Activated CD4-positive, alpha-beta T cell treated with anti-CD3 and anti-CD28 coated beads for 36 hours (primary cell): ENCODE measurements at regions of chr17 and their contacts with region 1.

Region 1: GRCh38 chr17:1516388-1517161 is at the start of gene INPP5K:
- DNase-seq: peak; percentile 99
- ATAC-seq: peak; percentile 99
- H3K4me3 Mint-ChIP-seq: peak within 1 kb of the TSS; percentile 85
- H3K27ac Mint-ChIP-seq: peak within 1 kb of the TSS; percentile 81
- H3K4me1 Mint-ChIP-seq: peaks cover 28% of the 10 kb centered on the region
- H3K27me3 Mint-ChIP-seq: no peaks in the 10 kb centered on the region
- total RNA-seq, gene INPP5K: 18.5 to 27.3 TPM

Region 2: GRCh38 chr17:1267471-1267947 is 249.1 kb before region 1 on chr17:
- CTCF ChIA-PET with region 1: no interaction called
- POLR2A ChIA-PET with region 1: no interaction called
- intact Hi-C with region 1: loop called in 1 of 2 experiments (anchors 1 kb)
- DNase-seq: no peak
- ATAC-seq: peak; percentile 9
- H3K4me3 Mint-ChIP-seq: peak overlapping the region; percentile 74
- H3K27ac Mint-ChIP-seq: peak overlapping the region; percentile 47
- H3K4me1 Mint-ChIP-seq: peaks cover 9% of the 10 kb centered on the region
- H3K27me3 Mint-ChIP-seq: peaks cover 14% of the 10 kb centered on the region

Region 3: DNA sequence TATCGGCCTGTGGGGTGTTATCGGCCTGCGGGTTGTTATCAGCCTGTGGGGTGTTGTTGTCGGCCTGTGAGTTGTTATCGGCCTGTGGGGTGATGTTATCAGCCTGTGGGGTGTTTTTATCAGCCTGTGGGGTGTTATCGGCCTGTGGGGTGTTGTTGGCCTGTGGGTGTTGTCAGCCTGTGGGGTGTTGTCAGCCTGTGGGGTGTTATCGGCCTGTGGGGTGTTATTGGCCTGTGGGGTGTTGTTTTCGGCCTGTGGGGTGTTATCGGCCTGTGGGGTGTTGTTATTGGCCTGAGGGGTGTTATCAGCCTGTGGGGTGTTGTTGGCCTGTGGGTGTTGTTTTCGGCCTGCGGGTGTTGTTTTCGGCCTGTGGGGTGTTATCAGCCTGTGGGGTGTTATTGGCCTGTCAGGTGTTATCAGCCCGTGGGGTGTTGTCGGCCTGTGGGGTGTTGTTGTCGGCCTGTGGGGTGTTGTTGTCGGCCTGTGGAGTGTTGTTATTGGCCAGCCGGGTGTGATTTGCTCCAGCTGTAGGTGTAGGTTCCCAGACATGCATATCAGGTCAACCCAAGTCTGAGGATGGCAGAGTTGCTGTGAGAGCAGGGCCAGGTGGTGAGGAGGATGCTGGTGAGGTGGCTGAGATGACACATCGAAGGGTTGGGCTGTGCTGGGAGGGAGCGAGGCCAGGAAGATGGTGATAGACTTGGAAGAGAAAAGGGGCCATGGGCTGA is 230.0 kb before region 1 on chr17:
- CTCF ChIA-PET with region 1: no interaction called
- POLR2A ChIA-PET with region 1: no interaction called
- intact Hi-C with region 1: no loop called
- DNase-seq: no peak
- ATAC-seq: no peak
- H3K4me3 Mint-ChIP-seq: no peak overlapping the region
- H3K27ac Mint-ChIP-seq: no peak overlapping the region
- H3K4me1 Mint-ChIP-seq: no peaks in the 10 kb centered on the region
- H3K27me3 Mint-ChIP-seq: no peaks in the 10 kb centered on the region

Region 4: GRCh38 chr17:1374431-1375177 is 142.0 kb before region 1 on chr17:
- CTCF ChIA-PET with region 1: interaction called, 10 read pairs
- POLR2A ChIA-PET with region 1: interaction called, 5 read pairs
- intact Hi-C with region 1: no loop called
- DNase-seq: no peak
- ATAC-seq: peak; percentile 70
- H3K4me3 Mint-ChIP-seq: peak overlapping the region; percentile 25
- H3K27ac Mint-ChIP-seq: peak overlapping the region; percentile 59
- H3K4me1 Mint-ChIP-seq: peaks cover 75% of the 10 kb centered on the region
- H3K27me3 Mint-ChIP-seq: no peaks in the 10 kb centered on the region

Region 5: DNA sequence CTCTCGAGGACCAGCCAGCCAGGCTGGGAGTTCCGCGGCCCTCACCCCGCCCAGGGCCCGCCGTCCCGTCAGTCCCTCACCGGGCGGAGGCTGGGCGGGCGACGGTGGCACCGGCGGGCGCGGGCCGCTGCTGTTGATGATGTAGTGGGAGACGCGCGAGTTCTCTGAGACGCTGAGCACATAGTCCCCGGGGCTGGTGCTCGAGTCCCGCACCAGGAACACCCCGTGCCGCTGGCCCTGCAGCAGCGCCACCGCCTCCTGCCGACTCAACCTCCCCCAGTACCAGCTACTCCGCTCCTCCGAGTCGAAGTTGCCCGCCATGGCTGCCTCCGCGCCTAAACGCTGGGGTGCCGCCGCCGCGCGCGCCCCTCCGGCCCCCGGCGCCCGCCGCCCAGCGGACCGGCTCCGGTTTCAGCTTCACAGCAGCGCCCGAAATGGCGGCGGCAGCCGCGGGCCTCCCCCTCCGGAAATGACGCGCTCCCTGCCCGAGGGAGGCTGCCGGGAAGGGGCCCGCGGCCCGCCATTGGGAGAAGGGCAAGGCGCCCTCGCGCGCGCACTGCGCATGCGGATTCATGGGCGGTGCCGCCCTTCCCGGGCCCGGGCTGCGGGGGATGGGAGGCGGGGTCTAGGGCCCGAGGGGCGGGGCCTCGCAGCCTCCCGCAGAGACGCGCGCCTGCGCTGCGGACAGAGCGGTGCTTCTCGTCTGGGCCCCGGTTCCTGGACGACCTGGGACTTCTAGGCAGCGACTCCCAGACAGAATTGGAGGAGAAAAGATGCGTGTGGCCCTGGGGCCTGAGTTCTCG is 60.6 kb before region 1 on chr17 and contains the start of gene CRK:
- CTCF ChIA-PET with region 1: interaction called, 4 read pairs
- POLR2A ChIA-PET with region 1: no interaction called
- intact Hi-C with region 1: loop called (anchors 1 kb)
- DNase-seq: peak; percentile 99
- ATAC-seq: peak; percentile 93
- H3K4me3 Mint-ChIP-seq: peak within 1 kb of the TSS; percentile 82
- H3K27ac Mint-ChIP-seq: peak within 1 kb of the TSS; percentile 89
- H3K4me1 Mint-ChIP-seq: peaks cover 46% of the 10 kb centered on the region
- H3K27me3 Mint-ChIP-seq: peaks cover 9% of the 10 kb centered on the region
- total RNA-seq, gene CRK: 10.1 to 11.6 TPM

Region 6: GRCh38 chr17:1503699-1504098 is 12.9 kb before region 1 on chr17:
- CTCF ChIA-PET with region 1: interaction called, 13 read pairs
- POLR2A ChIA-PET with region 1: interaction called, 5 read pairs
- intact Hi-C with region 1: no loop called
- DNase-seq: no peak
- ATAC-seq: no peak
- H3K4me3 Mint-ChIP-seq: no peak overlapping the region
- H3K27ac Mint-ChIP-seq: no peak overlapping the region
- H3K4me1 Mint-ChIP-seq: no peaks in the 10 kb centered on the region
- H3K27me3 Mint-ChIP-seq: no peaks in the 10 kb centered on the region

Region 7: GRCh38 chr17:1628856-1629646 is 112.5 kb after region 1 on chr17:
- CTCF ChIA-PET with region 1: interaction called, 4 read pairs
- POLR2A ChIA-PET with region 1: interaction called, 3 read pairs
- intact Hi-C with region 1: loop called in 1 of 2 experiments (anchors 1 kb)
- DNase-seq: peak; percentile 93
- ATAC-seq: peak; percentile 80
- H3K4me3 Mint-ChIP-seq: peak overlapping the region; percentile 76
- H3K27ac Mint-ChIP-seq: peak overlapping the region; percentile 56
- H3K4me1 Mint-ChIP-seq: peaks cover 7% of the 10 kb centered on the region
- H3K27me3 Mint-ChIP-seq: peaks cover 12% of the 10 kb centered on the region

Region 8: GRCh38 chr17:1829592-1830257 is 313.1 kb after region 1 on chr17 and contains the starts of genes RPA1 and SMYD4:
- CTCF ChIA-PET with region 1: no interaction called
- POLR2A ChIA-PET with region 1: no interaction called
- intact Hi-C with region 1: loop called in 1 of 2 experiments (anchors 1 kb)
- DNase-seq: peak; percentile 95
- ATAC-seq: peak; percentile 98
- H3K4me3 Mint-ChIP-seq: peak within 1 kb of the TSS; percentile 98
- H3K27ac Mint-ChIP-seq: peak within 1 kb of the TSS; percentile 93
- H3K4me1 Mint-ChIP-seq: peaks cover 59% of the 10 kb centered on the region
- H3K27me3 Mint-ChIP-seq: no peaks in the 10 kb centered on the region
- total RNA-seq, gene RPA1: 134 to 191 TPM
- total RNA-seq, gene SMYD4: 19.7 to 19.8 TPM